ENCODE measurements at regions of chr12 and their contacts with region 1.

Region 1: DNA sequence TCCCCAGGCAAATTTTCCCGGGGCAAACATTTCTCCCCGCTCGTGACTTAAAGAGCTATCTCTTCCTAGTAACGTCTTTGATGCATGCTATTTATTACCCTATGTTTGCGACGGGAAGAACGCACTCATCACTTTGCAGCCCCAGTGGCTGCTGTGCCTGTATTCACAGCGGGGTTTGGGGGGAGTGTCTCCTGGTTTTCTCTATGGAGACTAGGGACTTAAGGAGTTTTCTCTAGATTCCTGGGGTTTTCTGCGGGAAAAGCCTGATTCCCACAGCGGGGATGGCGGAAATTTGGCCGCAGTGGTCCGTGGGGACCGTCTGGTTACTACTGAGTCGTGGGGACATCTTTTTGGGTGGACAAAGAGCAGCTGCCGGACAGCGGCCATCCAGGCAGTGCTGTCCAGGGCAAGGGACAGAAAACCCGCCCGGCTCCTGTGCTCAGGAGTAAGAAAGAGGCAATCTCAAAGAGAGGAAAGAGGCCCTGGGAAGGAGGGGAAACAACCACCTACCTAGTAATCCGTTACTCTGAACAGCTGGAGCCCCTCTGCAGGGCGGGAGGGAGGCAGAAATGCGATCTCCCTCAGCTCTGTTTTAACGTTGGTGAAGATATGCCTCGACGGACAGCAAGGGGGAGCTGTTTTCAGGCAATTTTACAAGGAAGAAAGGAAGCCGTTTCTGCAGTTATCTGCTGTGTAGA is 771 bp upstream of the AVPR1A start:
- DNase-seq: peak; percentile 72
- ATAC-seq: peak; percentile 78
- H3K4me3 Mint-ChIP-seq: peak overlapping the region; percentile 82
- H3K27ac Mint-ChIP-seq: no peak overlapping the region
- H3K4me1 Mint-ChIP-seq: peaks cover 19% of the 10 kb centered on the region
- H3K27me3 Mint-ChIP-seq: peaks cover 58% of the 10 kb centered on the region
- CTCF ChIP-seq: peak; percentile 88

Region 2: DNA sequence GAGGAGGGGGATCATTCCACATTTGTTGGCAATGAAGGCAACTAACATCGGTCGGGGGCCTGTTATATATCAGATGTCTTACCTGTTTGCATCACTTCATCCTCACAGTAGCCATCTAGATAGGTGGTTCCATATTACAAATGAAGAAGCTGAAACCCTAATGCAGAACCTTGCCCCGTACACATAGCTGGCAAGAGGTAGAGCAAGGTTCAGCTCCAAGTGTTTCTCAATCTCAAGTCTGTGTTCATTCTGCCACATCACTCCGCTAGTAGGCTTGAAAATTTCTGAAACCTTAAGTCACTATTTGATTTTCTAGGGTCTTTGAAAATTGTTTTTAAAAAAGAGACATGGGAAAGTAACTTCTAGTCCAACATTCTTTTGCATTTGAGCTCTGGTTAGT is 17.8 kb before region 1 on chr12:
- CTCF ChIA-PET with region 1: interaction called, 14 read pairs
- POLR2A ChIA-PET with region 1: no interaction called
- DNase-seq: no peak
- ATAC-seq: no peak
- H3K4me3 Mint-ChIP-seq: no peak overlapping the region
- H3K27ac Mint-ChIP-seq: no peak overlapping the region
- H3K4me1 Mint-ChIP-seq: no peaks in the 10 kb centered on the region
- H3K27me3 Mint-ChIP-seq: no peaks in the 10 kb centered on the region
- CTCF ChIP-seq: no peak

Region 3: DNA sequence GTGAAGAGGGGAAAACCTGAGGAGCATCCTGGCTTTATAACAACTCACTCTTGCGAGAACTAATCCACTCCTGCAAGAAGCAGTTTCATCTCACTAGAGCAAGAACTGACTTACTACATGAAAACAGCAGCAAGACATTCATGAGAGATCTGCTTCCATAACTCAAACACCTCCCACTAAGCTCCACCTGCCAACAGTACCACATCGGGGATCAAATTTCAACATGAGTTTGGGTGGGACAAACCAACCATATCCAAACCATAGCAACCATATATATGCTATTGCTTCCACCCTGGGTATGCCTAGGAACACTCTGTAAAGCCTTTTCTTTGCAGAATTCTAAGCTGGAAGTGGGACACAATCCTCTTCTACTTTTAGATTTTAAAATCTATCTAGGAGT is 13.1 kb after region 1 on chr12:
- CTCF ChIA-PET with region 1: interaction called, 12 read pairs
- POLR2A ChIA-PET with region 1: no interaction called
- DNase-seq: no peak
- ATAC-seq: no peak
- H3K4me3 Mint-ChIP-seq: no peak overlapping the region
- H3K27ac Mint-ChIP-seq: no peak overlapping the region
- H3K4me1 Mint-ChIP-seq: 0 out of 2 replicates have a peak, but pooled peaks cover 7% of the 10 kb centered on the region
- H3K27me3 Mint-ChIP-seq: peaks cover 2% of the 10 kb centered on the region; the same call in 1 of the 2 replicates
- CTCF ChIP-seq: no peak

Region 4: DNA sequence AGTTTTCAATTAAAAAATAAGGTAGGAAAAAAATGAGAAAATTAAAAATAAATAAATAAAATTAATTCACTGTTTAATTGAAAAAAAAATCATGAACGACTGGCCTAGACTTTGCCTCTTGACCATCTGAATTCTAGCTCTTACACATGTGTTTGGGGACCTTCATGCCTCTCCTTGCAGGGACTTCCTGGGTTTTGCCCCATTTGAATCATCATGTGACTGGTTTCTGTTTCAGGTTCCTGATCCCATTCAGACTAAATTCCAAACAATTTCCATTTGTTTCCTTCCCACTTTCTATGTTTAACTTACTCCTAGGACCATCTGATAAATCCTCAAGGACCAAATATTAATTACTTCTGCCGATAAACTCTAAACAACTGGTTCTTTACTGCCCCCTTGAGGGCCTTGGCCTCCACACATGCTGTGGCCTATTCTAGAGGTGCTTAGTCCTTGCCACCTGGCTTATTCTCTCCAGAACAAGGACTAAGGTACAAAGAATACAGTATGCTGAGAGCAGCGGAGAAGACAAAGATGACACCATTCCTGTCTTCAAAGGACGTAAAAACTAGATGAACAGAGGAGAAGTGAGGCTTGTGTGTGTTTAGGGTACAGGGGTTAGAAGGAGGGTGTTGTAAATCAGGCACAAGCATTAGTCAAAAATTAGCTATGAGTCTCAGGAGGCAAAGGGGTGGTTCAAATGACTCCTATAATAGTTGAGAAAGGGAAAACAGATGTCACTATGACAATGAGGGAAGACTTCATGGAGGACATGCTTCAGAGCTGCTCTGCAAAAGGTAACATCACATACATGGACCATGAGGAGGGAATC is 125.0 kb after region 1 on chr12:
- CTCF ChIA-PET with region 1: interaction called, 31 read pairs
- POLR2A ChIA-PET with region 1: no interaction called
- DNase-seq: peak; percentile 76
- ATAC-seq: peak; percentile 99
- H3K4me3 Mint-ChIP-seq: no peak overlapping the region
- H3K27ac Mint-ChIP-seq: no peak overlapping the region
- H3K4me1 Mint-ChIP-seq: no peaks in the 10 kb centered on the region
- H3K27me3 Mint-ChIP-seq: no peaks in the 10 kb centered on the region
- CTCF ChIP-seq: peak; percentile 71

Measured in WTC11 (cell line).